ENCODE measurements at regions of chr11 and their contacts with region 1.

Region 1: GRCh38 chr11:60775420-60775961 is 9.6 kb upstream of the MS4A10 start:
- DNase-seq: peak; percentile 91
- ATAC-seq: peak; percentile 98
- H3K4me3 Mint-ChIP-seq: no peak overlapping the region
- H3K27ac Mint-ChIP-seq: no peak overlapping the region
- H3K4me1 Mint-ChIP-seq: peaks cover 7% of the 10 kb centered on the region
- H3K27me3 Mint-ChIP-seq: no peaks in the 10 kb centered on the region

Region 2: DNA sequence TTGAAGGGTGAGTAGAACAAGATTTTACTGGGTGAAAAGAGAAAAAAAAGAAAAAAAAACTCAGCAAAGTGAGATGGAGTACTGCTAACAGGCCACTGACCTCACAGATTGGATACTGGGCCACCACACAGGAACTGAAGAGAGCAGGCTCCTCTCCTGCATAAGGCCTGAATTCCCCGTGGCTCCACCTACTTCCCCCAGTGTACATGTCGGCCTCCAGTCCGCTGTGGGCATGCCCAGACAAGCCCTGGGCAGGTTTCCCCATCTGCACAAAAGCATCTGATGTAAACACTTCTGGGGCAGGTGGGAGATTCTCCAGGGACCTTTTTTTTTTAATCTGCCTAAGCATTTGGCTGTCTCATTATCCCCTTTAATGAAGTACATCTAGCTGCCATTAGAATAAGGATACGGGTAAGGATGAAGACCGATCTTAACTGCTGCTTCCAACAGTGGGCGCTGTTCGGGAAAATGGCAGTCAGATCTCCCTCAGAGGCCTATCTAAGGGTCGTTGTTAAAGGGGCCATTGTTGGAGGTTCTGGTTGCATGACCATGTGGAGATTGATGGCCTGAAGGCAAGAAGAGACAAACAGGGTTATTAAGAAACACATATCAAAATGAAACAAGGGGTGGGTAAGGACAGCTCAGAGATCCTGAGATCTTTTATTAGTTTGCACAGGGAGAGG is 211.8 kb before region 1 on chr11:
- CTCF ChIA-PET with region 1: no interaction called
- POLR2A ChIA-PET with region 1: no interaction called
- intact Hi-C with region 1: no loop called
- DNase-seq: peak; percentile 10
- ATAC-seq: no peak
- H3K4me3 Mint-ChIP-seq: no peak overlapping the region
- H3K27ac Mint-ChIP-seq: no peak overlapping the region
- H3K4me1 Mint-ChIP-seq: no peaks in the 10 kb centered on the region
- H3K27me3 Mint-ChIP-seq: peaks cover 7% of the 10 kb centered on the region

Region 3: DNA sequence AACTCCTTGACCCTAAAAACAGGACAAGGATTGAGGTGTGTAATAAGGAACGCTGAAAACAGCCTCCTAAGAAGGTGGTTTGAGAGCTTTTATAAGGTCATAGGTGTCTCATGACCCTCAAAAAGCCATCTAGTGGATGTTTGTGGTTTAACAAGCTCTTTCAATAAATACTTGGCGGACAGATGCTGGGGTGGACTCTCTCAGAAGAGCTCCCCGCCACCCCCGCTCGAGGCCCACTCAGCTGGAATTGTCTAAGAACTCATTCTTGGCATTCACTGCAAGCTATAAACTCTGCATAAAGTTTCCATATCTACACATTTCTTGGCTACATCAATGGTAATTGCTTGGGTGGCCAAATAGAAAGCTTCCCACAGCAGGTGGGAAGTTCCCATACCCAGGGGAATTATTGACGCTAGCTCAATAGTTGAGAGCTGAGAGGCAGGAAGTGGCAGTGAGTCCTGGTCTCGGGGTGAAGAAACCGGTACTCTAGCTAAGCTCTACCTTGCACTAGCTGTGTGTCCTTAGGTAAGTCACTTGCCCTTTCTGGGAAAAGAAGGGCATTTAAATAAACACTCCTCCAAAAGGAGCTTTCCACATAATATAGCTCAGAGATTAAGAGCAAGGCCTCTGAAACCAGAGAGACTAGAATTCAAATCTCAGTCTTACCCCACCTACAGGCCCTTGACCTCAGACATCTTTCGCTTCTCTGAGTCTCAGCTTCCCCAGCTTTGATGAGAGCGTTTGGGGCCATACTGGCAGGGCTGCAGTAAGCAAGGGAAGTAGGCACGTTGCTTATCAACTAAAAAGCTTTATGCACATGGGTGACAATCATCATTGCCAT is 12.4 kb before region 1 on chr11:
- CTCF ChIA-PET with region 1: interaction called, 105 read pairs
- POLR2A ChIA-PET with region 1: no interaction called
- intact Hi-C with region 1: no loop called
- DNase-seq: no peak
- ATAC-seq: peak; percentile 45
- H3K4me3 Mint-ChIP-seq: no peak overlapping the region
- H3K27ac Mint-ChIP-seq: no peak overlapping the region
- H3K4me1 Mint-ChIP-seq: peaks cover 8% of the 10 kb centered on the region
- H3K27me3 Mint-ChIP-seq: peaks cover 29% of the 10 kb centered on the region

Region 4: GRCh38 chr11:60797846-60798630 is 22.5 kb after region 1 on chr11:
- CTCF ChIA-PET with region 1: interaction called, 13 read pairs
- POLR2A ChIA-PET with region 1: no interaction called
- intact Hi-C with region 1: no loop called
- DNase-seq: no peak
- ATAC-seq: no peak
- H3K4me3 Mint-ChIP-seq: no peak overlapping the region
- H3K27ac Mint-ChIP-seq: no peak overlapping the region
- H3K4me1 Mint-ChIP-seq: no peaks in the 10 kb centered on the region
- H3K27me3 Mint-ChIP-seq: peaks cover 7% of the 10 kb centered on the region

Region 5: GRCh38 chr11:60887556-60887955 is 112.1 kb after region 1 on chr11:
- CTCF ChIA-PET with region 1: interaction called, 3 read pairs
- POLR2A ChIA-PET with region 1: interaction called, 3 read pairs
- intact Hi-C with region 1: loop called in 1 of 2 experiments (anchors 1 kb)
- DNase-seq: peak; percentile 60
- ATAC-seq: peak; percentile 90
- H3K4me3 Mint-ChIP-seq: no peak overlapping the region
- H3K27ac Mint-ChIP-seq: no peak overlapping the region
- H3K4me1 Mint-ChIP-seq: no peaks in the 10 kb centered on the region
- H3K27me3 Mint-ChIP-seq: no peaks in the 10 kb centered on the region

Region 6: DNA sequence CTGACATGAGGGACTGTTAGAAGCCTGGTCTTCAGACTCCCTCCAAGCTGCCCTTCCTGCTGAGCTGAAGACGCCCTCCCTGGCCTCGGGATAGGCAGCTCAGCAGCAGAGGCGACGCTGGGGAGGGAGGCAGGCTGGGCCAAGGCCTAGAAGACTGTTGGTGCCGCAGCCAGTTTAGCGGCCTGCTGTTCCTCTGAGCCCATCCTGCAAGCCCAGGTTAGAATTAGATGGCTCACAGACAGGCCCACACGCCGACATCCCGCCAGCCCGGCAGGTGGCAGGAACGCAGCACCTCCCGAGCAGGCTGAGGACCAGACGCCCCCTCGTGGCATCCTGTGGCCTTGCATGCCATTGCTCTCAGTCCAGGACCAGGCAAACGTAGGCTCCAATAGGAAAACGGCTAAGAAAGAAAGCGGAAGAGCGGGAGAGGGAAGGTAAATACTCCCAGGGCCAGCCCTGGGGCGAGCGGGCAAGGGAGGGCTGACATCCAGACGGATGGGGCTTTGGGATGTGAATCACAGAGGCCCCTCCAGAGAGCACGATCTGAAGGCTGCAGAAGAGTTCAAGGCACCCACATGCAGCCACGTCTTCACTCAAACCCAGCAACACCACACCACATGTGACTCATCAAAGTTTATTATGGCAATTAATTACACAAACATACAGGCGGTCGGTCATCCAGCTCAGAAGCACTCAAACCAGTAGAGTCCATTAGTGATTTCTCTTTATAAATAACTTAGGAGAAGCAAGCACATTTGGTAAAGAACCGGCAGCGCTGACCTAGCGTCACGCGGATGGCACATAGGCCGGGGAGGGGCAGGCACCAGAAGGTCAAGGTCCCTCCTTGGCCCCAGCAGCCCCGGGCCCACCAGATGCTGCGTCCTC is 354.4 kb after region 1 on chr11:
- CTCF ChIA-PET with region 1: interaction called, 3 read pairs
- POLR2A ChIA-PET with region 1: no interaction called
- intact Hi-C with region 1: loop called in 1 of 2 experiments (anchors 5 kb)
- DNase-seq: peak; percentile 97
- ATAC-seq: peak; percentile 89
- H3K4me3 Mint-ChIP-seq: peak overlapping the region; percentile 14
- H3K27ac Mint-ChIP-seq: peak overlapping the region; percentile 64
- H3K4me1 Mint-ChIP-seq: peaks cover 27% of the 10 kb centered on the region
- H3K27me3 Mint-ChIP-seq: no peaks in the 10 kb centered on the region

Region 7: GRCh38 chr11:61384271-61385242 is 609.1 kb after region 1 on chr11:
- CTCF ChIA-PET with region 1: no interaction called
- POLR2A ChIA-PET with region 1: no interaction called
- intact Hi-C with region 1: loop called in 1 of 2 experiments (anchors 2 kb)
- DNase-seq: no peak
- ATAC-seq: no peak
- H3K4me3 Mint-ChIP-seq: no peak overlapping the region
- H3K27ac Mint-ChIP-seq: no peak overlapping the region
- H3K4me1 Mint-ChIP-seq: peaks cover 3% of the 10 kb centered on the region
- H3K27me3 Mint-ChIP-seq: no peaks in the 10 kb centered on the region

Measured in activated CD4-positive, alpha-beta T cell treated with anti-CD3 and anti-CD28 coated beads for 36 hours (primary cell).